Endothelial cell of umbilical vein (primary cell): ENCODE measurements at regions of chr10 and their contacts with region 1.

Region 1: GRCh38 chr10:4813023-4813422 is 13.0 kb upstream of the AKR1E2 start:
- DNase-seq: peak; percentile 22
- H3K4me3 ChIP-seq: no peak overlapping the region
- H3K27ac ChIP-seq: no peak overlapping the region
- H3K4me1 ChIP-seq: peaks cover 31% of the 10 kb centered on the region
- H3K27me3 ChIP-seq: peaks cover 0 to 2% of the 10 kb centered on the region in 2 experiments
- CTCF ChIP-seq: no peak
- POLR2A ChIP-seq: no peak

Region 2: GRCh38 chr10:4725917-4726606 is 87.0 kb before region 1 on chr10:
- CTCF ChIA-PET with region 1: interaction called, 5 read pairs
- POLR2A ChIA-PET with region 1: no interaction called
- dilution Hi-C with region 1: no loop called
- intact Hi-C with region 1: loop called (anchors 5 kb)
- DNase-seq: peak; percentile 93
- H3K4me3 ChIP-seq: no peak overlapping the region
- H3K27ac ChIP-seq: peak overlapping the region; percentile 96
- H3K4me1 ChIP-seq: peaks cover 15% of the 10 kb centered on the region
- H3K27me3 ChIP-seq: no peaks in the 10 kb centered on the region
- CTCF ChIP-seq: no peak
- POLR2A ChIP-seq: no peak

Region 3: DNA sequence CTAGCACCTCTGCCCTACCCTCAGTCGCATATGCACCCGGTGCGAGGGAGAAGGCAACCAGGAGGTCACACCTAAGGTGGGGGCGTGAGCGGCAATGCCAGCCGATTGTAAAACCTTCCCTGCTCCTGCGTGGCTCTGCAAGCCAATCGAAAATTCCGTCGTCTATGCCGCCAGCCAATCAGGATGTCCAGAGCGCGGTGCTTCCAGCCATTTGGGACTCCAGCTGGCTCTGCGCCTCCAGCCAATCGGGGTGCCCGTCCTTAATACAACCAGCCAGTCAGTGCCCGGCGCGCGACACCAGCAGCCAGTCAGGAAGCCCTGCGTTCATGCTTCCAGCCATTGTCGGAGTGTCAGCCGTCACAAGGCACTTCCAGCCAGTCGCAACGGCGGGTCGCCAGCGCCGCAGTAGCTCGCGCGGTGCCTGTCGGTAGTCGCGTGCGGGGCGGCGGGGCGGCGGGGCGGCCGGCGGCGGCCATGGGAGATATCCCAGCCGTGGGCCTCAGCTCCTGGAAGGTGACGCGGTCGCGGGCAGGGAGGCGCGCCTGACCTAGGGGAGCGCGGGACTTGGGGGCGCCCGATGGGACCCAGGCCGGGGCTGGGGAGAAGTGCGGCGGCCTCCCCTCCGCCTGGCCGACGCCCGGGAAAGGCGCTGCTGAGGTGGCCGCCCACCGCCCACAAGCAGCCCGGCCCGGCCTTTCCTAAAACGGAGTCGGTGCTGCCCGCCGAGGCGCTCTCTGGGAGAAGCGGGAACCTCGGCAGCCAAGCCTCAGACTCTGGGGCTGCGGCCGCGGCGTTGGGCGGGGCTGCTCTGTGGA is 13.0 kb after region 1 on chr10 and contains the start of gene AKR1E2:
- CTCF ChIA-PET with region 1: interaction called, 15 read pairs
- POLR2A ChIA-PET with region 1: no interaction called
- dilution Hi-C with region 1: no loop called
- intact Hi-C with region 1: no loop called
- DNase-seq: peak; percentile 94
- H3K4me3 ChIP-seq: peak within 1 kb of the TSS; percentile 25 to 50 (median 39)
- H3K27ac ChIP-seq: peak within 1 kb of the TSS; percentile 78
- H3K4me1 ChIP-seq: peaks cover 5% of the 10 kb centered on the region
- H3K27me3 ChIP-seq: peaks cover 0 to 1% of the 10 kb centered on the region in 2 experiments
- CTCF ChIP-seq: no peak
- POLR2A ChIP-seq: no peak
- total RNA-seq, gene AKR1E2: 5.8 and 8.2 TPM in 2 replicates

Region 4: GRCh38 chr10:4981722-4982471 is 168.9 kb after region 1 on chr10:
- CTCF ChIA-PET with region 1: interaction called, 13 read pairs
- POLR2A ChIA-PET with region 1: no interaction called
- dilution Hi-C with region 1: no loop called
- intact Hi-C with region 1: no loop called
- DNase-seq: peak; percentile 62
- H3K4me3 ChIP-seq: no peak overlapping the region
- H3K27ac ChIP-seq: no peak overlapping the region
- H3K4me1 ChIP-seq: peaks cover 3% of the 10 kb centered on the region
- H3K27me3 ChIP-seq: peaks cover 0 to 3% of the 10 kb centered on the region in 2 experiments
- CTCF ChIP-seq: peak; percentile 48 to 50
- POLR2A ChIP-seq: no peak

Region 5: DNA sequence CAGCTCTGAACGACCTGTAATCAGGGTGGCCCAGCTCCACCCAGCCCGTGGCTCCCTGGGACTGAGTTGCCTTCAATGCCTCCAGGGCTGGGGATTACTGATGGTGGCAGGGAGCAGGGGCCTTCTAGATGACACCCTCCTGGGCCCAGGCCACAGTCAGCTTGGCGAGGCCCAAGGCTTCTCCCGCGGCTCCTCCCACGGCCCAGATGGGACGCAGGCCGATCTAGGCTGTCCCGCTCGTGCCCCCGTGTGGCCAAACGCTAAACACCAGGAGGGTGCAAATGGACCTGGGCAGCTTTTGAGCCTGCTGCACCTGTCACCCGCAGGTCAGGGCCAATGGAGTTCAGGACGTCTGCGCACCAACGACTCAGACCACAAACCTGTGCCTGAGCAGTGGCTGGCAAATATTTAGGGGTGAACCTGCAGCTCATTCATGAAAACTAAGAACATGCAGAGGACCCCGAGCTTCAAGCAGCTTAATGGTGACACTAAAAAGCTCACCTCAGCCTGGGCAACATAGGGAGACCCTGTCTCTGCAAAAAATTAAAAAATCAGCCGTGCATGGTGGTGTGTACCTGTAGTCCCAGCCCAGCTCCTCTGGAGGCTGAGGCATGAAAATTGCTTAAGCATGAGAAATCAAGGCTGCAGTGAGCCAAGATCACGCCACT is 810.2 kb after region 1 on chr10:
- CTCF ChIA-PET with region 1: interaction called, 11 read pairs
- POLR2A ChIA-PET with region 1: no interaction called
- dilution Hi-C with region 1: no loop called
- intact Hi-C with region 1: no loop called
- DNase-seq: peak; percentile 75
- H3K4me3 ChIP-seq: no peak overlapping the region
- H3K27ac ChIP-seq: no peak overlapping the region
- H3K4me1 ChIP-seq: no peaks in the 10 kb centered on the region
- H3K27me3 ChIP-seq: no peaks in the 10 kb centered on the region
- CTCF ChIP-seq: peak; percentile 89 to 94
- POLR2A ChIP-seq: no peak